ENCODE measurements at regions of chr12 and their contacts with region 1.

Region 1: DNA sequence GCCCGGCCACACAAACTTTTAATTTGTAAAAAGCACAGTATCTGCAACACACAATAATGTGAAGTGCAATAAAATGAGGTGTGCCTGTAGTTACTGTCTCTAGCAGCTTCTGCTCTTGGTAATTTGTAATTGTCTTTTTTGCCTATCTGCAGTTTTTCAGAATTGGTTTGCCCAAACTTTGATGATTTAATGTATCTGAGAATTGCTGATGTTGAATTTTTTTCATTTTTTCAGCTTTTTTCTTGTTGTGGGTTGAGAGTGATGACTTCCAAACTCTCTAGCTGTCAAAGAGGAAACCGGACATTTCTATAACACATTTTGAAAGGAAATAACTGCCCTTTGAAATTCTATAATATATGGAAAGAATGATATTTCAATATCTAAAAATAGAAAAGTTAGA is 236.9 kb downstream of the RERGL start:
- DNase-seq: no peak
- H3K4me3 ChIP-seq: no peak overlapping the region
- H3K27ac ChIP-seq: no peak overlapping the region
- H3K4me1 ChIP-seq: no peaks in the 10 kb centered on the region
- H3K27me3 ChIP-seq: no peaks in the 10 kb centered on the region
- CTCF ChIP-seq: no peak

Region 2: DNA sequence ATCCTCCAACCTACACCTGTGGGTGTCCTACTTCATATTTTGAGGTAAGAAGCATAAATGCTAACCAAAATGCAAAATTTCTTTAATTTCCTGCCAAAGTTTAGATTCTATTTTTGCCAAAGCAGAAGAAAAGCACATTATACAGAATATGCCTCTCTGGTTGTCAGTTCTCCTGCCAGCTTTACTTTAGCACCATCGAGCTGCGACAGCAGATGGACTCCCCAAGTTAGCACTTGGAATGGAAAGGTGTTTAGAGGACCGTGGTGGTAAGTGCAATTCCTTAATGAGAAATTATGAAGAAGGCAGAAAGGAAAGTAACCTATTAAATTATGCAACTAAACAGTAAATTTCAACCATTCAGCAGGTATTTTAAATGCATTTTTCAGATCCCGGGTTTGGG is 89.7 kb before region 1 on chr12:
- intact Hi-C with region 1: loop called (anchors 5 kb)
- DNase-seq: no peak
- H3K4me3 ChIP-seq: no peak overlapping the region
- H3K27ac ChIP-seq: no peak overlapping the region
- H3K4me1 ChIP-seq: no peaks in the 10 kb centered on the region
- H3K27me3 ChIP-seq: no peaks in the 10 kb centered on the region
- CTCF ChIP-seq: no peak